AG04450 (cell line): ENCODE measurements at regions of chr2 and their contacts with region 1.

Region 1: DNA sequence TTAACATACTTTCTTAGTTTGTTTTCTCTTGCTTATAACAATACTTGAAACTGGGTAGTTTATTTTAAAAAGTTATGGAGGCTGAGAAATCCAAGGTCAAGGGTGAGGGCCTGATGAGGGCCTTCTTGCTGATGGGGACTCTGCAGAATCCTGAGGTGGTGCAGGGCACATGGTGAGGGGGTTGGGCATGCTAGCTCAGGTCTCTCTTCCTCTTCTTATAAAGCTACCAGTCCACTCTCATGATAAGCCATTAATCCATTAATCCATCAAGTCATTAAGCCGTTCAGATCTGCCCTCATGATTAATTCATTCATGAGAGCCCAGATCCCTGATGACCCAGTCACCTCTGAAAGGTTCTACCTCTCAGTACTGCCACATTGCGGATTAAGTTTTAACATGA is 21.4 kb downstream of the ALMS1 start:
- DNase-seq: no peak
- H3K4me3 ChIP-seq: no peak overlapping the region
- H3K27ac ChIP-seq: no peak overlapping the region
- H3K27me3 ChIP-seq: no peaks in the 10 kb centered on the region
- CTCF ChIP-seq: no peak

Region 2: DNA sequence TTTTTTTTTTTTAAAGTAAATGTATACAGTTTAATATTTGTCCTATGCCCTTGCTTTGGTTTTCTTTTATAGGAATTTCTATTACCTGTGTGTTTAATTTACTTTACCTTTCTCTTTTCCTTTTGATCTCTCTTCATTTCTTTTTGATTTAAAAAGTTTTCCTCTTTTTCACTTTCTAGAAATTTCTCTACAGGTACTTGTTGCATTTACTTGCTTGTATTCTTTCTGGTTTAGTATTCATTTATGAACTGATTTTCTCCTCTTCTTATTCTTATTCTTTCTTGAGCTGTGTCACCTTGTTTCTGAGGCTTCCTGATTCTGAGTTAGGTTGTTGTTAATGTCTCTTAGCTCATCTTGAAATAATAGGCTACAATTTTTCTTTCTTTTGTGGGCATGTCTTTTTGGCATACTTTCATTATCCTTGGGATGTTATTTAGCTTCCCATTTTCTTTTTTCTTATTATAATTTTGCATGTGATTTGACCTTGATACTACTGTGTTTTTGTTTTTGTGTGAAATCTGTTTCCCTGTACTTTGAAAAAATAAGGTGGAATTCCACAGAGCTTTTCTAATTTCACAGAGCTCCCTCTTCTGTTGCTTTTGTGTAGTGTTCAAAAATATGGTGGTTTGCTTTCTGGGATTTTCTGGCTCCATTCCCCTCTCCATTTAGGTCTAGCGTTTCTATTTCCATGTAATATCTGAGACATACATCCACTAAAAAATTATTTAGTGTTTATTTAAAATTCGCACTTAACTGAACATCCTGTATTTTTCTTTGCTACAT is 46.9 kb before region 1 on chr2:
- CTCF ChIA-PET with region 1: interaction called, 15 read pairs
- POLR2A ChIA-PET with region 1: no interaction called
- DNase-seq: no peak
- H3K4me3 ChIP-seq: no peak overlapping the region
- H3K27ac ChIP-seq: no peak overlapping the region
- H3K27me3 ChIP-seq: no peaks in the 10 kb centered on the region
- CTCF ChIP-seq: peak; percentile 51

Region 3: DNA sequence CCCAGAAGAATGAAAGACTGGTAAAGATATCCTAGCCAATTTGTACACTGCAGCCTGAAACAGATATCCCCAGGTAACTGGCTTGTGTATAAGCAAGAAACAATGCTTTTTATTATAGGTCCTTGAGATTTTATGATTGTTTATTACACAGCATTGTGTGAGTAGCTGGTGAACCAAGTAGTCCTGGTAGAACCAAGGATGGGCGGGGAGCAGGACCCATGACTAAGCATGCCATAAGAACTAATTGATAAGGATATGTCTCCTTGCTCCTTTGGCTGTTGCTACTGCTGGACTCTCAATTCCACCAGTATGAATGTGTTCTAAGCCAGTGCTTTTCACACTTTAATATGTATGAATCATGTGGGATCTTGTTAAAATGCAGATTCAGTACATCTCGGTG is 33.7 kb before region 1 on chr2:
- CTCF ChIA-PET with region 1: no interaction called
- POLR2A ChIA-PET with region 1: no interaction called
- DNase-seq: no peak
- H3K4me3 ChIP-seq: no peak overlapping the region
- H3K27ac ChIP-seq: no peak overlapping the region
- H3K27me3 ChIP-seq: peaks cover 14% of the 10 kb centered on the region
- CTCF ChIP-seq: no peak